HepG2 (cell line): ENCODE measurements at regions of chr15 and their contacts with region 1.

Region 1: DNA sequence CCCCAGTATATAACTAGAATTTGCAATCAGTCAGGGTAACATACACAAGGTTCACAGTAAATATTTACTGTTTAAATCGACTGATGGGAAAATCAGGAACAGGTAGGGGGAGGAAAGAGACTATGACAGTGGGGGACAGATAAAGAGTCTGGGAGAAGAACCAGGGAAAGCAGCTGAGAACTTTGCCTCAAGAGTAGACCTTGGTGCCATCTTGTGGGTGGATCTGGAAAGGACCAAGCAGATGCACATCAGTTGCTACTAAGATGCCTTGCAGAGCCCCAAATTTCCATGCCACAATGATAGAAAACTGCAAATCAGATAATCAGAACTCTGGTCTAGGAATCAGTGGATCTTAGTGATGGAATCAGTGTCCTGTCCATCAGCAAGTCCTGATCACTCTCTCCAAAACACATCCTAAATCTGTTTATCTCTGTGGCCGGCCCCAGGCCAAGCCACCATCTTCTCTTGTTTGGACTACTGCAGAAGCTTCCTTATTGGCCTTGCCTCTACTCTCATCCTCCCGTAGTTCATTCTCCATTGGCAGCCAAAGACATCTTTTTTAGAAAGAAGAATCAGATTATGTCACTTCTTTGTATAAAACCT is 62.7 kb downstream of the PDE8A start:
- DNase-seq: peak; percentile 63
- ATAC-seq: peak; percentile 68
- H3K4me3 ChIP-seq: no peak overlapping the region
- H3K27ac ChIP-seq: no peak overlapping the region
- H3K4me1 ChIP-seq: peaks cover 79% of the 10 kb centered on the region
- H3K27me3 ChIP-seq: no peaks in the 10 kb centered on the region
- CTCF ChIP-seq: peak; percentile 84
- EP300 ChIP-seq: no peak
- POLR2A ChIP-seq: no peak
- RAD21 ChIP-seq: peak; percentile 80

Region 2: GRCh38 chr15:84570164-84570735 is 474.1 kb before region 1 on chr15:
- CTCF ChIA-PET with region 1: no interaction called
- POLR2A ChIA-PET with region 1: no interaction called
- in situ Hi-C with region 1: no loop called
- intact Hi-C with region 1: no loop called
- DNase-seq: no peak
- ATAC-seq: peak; percentile 64
- H3K4me3 ChIP-seq: peak overlapping the region; percentile 71 to 90 (median 87)
- H3K27ac ChIP-seq: peak overlapping the region; percentile 91
- H3K4me1 ChIP-seq: peaks cover 23% of the 10 kb centered on the region
- H3K27me3 ChIP-seq: no peaks in the 10 kb centered on the region; a peak in 1 of 5 replicates
- CTCF ChIP-seq: no peak
- EP300 ChIP-seq: no peak
- POLR2A ChIP-seq: peak in 1 of 2 experiments; percentile 32; a peak in 2 of 4 replicates
- RAD21 ChIP-seq: no peak

Region 3: GRCh38 chr15:84863565-84864443 is 180.5 kb before region 1 on chr15:
- CTCF ChIA-PET with region 1: no interaction called
- POLR2A ChIA-PET with region 1: no interaction called
- in situ Hi-C with region 1: no loop called
- intact Hi-C with region 1: no loop called
- DNase-seq: peak; percentile 14
- ATAC-seq: peak; percentile 35
- H3K4me3 ChIP-seq: peak overlapping the region in 1 of 3 experiments; percentile 17; a peak in 1 of 6 replicates
- H3K27ac ChIP-seq: no peak overlapping the region
- H3K4me1 ChIP-seq: peaks cover 36% of the 10 kb centered on the region
- H3K27me3 ChIP-seq: peaks cover 1 to 21% of the 10 kb centered on the region in 2 experiments; a peak in 3 of 5 replicates
- CTCF ChIP-seq: peak; percentile 47
- EP300 ChIP-seq: no peak
- POLR2A ChIP-seq: no peak
- RAD21 ChIP-seq: no peak

Region 4: GRCh38 chr15:84949845-84950569 is 94.3 kb before region 1 on chr15:
- CTCF ChIA-PET with region 1: interaction called, 21 read pairs
- POLR2A ChIA-PET with region 1: no interaction called
- in situ Hi-C with region 1: loop called (anchors 5 kb)
- intact Hi-C with region 1: loop called (anchors 1 kb)
- DNase-seq: no peak
- ATAC-seq: no peak
- H3K4me3 ChIP-seq: no peak overlapping the region
- H3K27ac ChIP-seq: no peak overlapping the region
- H3K4me1 ChIP-seq: peaks cover 53% of the 10 kb centered on the region
- H3K27me3 ChIP-seq: peaks cover 0 to 5% of the 10 kb centered on the region in 2 experiments; a peak in 2 of 5 replicates
- CTCF ChIP-seq: no peak
- EP300 ChIP-seq: no peak
- POLR2A ChIP-seq: no peak
- RAD21 ChIP-seq: no peak

Region 5: GRCh38 chr15:84981711-84982300 is 62.5 kb before region 1 on chr15 and contains the start of gene PDE8A:
- CTCF ChIA-PET with region 1: no interaction called
- POLR2A ChIA-PET with region 1: interaction called, 9 read pairs
- in situ Hi-C with region 1: no loop called
- intact Hi-C with region 1: loop called (anchors 1 kb)
- DNase-seq: no peak
- ATAC-seq: peak; percentile 4
- H3K4me3 ChIP-seq: peak within 1 kb of the TSS; percentile 85 to 91 (median 90)
- H3K27ac ChIP-seq: peak within 1 kb of the TSS; percentile 86
- H3K4me1 ChIP-seq: peaks cover 58% of the 10 kb centered on the region
- H3K27me3 ChIP-seq: peaks cover 3 to 11% of the 10 kb centered on the region in 2 experiments; a peak in 1 of 5 replicates
- CTCF ChIP-seq: no peak
- EP300 ChIP-seq: no peak
- POLR2A ChIP-seq: peak in 1 of 2 experiments; percentile 30; a peak in 2 of 4 replicates
- RAD21 ChIP-seq: no peak
- total RNA-seq, gene PDE8A: 24.2 and 26.3 TPM in 2 replicates

Region 6: DNA sequence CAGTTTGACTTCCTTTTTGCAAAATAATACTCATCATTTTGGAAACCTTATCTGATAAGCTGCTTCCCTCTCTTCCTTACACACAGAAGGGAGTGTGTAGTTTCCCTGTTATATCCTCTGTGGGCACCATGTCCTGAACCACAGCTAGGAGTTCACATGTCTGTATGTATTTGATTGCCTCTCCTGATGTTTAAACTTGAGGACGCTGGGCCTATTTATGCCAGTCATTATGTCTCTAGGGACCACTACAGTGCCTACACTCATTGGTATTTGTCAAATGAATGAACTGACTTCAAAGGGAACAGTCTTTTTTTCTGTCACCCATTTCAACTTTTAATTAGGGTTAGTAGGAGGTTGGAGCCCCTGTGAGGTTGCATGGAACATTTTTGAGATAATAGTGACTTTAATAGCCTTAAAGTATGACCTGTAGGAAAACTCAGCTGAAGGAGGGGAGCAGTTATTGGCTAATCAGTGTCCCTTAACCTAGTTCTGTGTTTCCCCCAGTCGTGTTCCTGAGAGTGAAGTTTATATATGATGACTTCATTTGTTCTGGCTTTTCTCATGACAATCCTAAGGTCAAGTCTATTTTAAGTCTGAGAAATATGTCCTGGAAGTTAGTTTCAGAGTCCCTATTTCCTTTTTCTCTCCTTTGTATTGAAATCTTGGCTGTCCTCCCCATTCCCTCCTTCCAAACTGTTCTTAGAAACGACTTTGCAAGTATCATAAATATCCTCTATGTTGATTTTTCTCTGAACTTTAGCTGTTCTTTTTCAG is 33.8 kb before region 1 on chr15:
- CTCF ChIA-PET with region 1: no interaction called
- POLR2A ChIA-PET with region 1: no interaction called
- in situ Hi-C with region 1: no loop called
- intact Hi-C with region 1: no loop called
- DNase-seq: no peak
- ATAC-seq: no peak; the same call in 2 of the 3 replicates
- H3K4me3 ChIP-seq: no peak overlapping the region
- H3K27ac ChIP-seq: peak overlapping the region; percentile 42
- H3K4me1 ChIP-seq: peaks cover 58% of the 10 kb centered on the region
- H3K27me3 ChIP-seq: no peaks in the 10 kb centered on the region
- CTCF ChIP-seq: no peak
- EP300 ChIP-seq: no peak
- POLR2A ChIP-seq: no peak
- RAD21 ChIP-seq: no peak